ENCODE measurements at regions of chr5 and their contacts with region 1.

Region 1: GRCh38 chr5:169548315-169548714 is 35.3 kb upstream of the SPDL1 start:
- DNase-seq: peak in 1 of 2 experiments; percentile 56
- H3K4me3 ChIP-seq: no peak overlapping the region
- H3K4me3 Mint-ChIP-seq: no peak overlapping the region
- H3K27ac Mint-ChIP-seq: no peak overlapping the region
- H3K4me1 ChIP-seq: peaks cover 6% of the 10 kb centered on the region
- H3K4me1 Mint-ChIP-seq: peaks cover 17% of the 10 kb centered on the region
- H3K27me3 ChIP-seq: no peaks in the 10 kb centered on the region
- H3K27me3 Mint-ChIP-seq: no peaks in the 10 kb centered on the region
- CTCF ChIP-seq: peak; percentile 51 to 57

Region 2: DNA sequence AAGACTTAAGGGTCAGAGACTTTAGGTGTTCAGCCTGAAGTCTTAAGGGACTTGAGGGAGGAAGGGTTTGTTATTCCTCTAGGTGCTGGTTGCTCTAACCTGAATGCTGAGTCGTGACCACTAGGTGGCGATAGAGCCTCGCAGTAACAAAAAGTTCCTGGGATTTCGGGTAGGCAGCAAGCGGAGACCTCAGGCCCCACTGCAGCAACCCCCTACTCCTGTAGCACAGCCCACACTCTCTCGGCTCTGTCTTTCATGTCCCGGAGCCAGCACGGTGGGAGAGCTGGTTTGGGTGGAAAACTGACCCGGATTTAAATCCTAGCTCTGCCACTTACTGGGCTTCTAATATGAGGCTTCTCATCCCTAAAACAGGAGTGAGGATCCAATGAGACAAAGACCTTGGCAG is 868.8 kb before region 1 on chr5:
- CTCF ChIA-PET with region 1: no interaction called
- POLR2A ChIA-PET with region 1: no interaction called
- intact Hi-C with region 1: loop called (anchors 1 kb)
- DNase-seq: peak; percentile 79 to 84
- H3K4me3 ChIP-seq: no peak overlapping the region
- H3K4me3 Mint-ChIP-seq: no peak overlapping the region
- H3K27ac Mint-ChIP-seq: no peak overlapping the region
- H3K4me1 ChIP-seq: peaks cover 12% of the 10 kb centered on the region
- H3K4me1 Mint-ChIP-seq: peaks cover 26% of the 10 kb centered on the region
- H3K27me3 ChIP-seq: no peaks in the 10 kb centered on the region
- H3K27me3 Mint-ChIP-seq: no peaks in the 10 kb centered on the region
- CTCF ChIP-seq: peak; percentile 92 to 94

Region 3: GRCh38 chr5:168947212-168947868 is 601.0 kb before region 1 on chr5:
- CTCF ChIA-PET with region 1: interaction called, 3 read pairs
- POLR2A ChIA-PET with region 1: no interaction called
- intact Hi-C with region 1: loop called (anchors 1 kb)
- DNase-seq: peak; percentile 71 to 77
- H3K4me3 ChIP-seq: no peak overlapping the region
- H3K4me3 Mint-ChIP-seq: no peak overlapping the region
- H3K27ac Mint-ChIP-seq: peak overlapping the region; percentile 80
- H3K4me1 ChIP-seq: peaks cover 34% of the 10 kb centered on the region
- H3K4me1 Mint-ChIP-seq: peaks cover 33% of the 10 kb centered on the region
- H3K27me3 ChIP-seq: no peaks in the 10 kb centered on the region
- H3K27me3 Mint-ChIP-seq: no peaks in the 10 kb centered on the region
- CTCF ChIP-seq: peak; percentile 86 to 88

Region 4: DNA sequence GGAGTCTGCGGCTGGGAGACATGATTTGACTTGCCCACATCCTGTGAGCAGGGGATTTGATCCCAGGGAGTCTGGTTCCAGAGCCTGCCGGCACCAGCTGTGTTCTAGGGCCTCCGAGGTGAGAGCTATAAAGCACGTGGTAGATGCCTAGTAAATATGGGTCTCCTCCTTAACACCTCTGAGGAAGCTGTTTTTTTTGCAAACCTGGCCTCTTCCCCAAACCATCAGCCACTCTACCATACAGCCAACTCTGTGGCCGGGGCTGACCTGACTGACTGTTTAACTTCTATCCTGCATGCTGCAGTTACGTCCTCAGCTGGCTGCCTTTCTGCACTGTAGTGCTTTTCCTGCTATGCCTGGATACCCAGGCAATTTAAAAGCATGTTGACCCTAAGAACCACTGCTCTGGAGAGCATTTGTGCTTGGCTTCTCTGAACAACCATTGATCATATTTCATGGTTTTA is 467.8 kb before region 1 on chr5:
- CTCF ChIA-PET with region 1: no interaction called
- POLR2A ChIA-PET with region 1: no interaction called
- intact Hi-C with region 1: no loop called
- DNase-seq: no peak
- H3K4me3 ChIP-seq: no peak overlapping the region
- H3K4me3 Mint-ChIP-seq: no peak overlapping the region
- H3K27ac Mint-ChIP-seq: no peak overlapping the region
- H3K4me1 ChIP-seq: no peaks in the 10 kb centered on the region
- H3K4me1 Mint-ChIP-seq: peaks cover 8% of the 10 kb centered on the region
- H3K27me3 ChIP-seq: no peaks in the 10 kb centered on the region
- H3K27me3 Mint-ChIP-seq: no peaks in the 10 kb centered on the region
- CTCF ChIP-seq: no peak

Region 5: DNA sequence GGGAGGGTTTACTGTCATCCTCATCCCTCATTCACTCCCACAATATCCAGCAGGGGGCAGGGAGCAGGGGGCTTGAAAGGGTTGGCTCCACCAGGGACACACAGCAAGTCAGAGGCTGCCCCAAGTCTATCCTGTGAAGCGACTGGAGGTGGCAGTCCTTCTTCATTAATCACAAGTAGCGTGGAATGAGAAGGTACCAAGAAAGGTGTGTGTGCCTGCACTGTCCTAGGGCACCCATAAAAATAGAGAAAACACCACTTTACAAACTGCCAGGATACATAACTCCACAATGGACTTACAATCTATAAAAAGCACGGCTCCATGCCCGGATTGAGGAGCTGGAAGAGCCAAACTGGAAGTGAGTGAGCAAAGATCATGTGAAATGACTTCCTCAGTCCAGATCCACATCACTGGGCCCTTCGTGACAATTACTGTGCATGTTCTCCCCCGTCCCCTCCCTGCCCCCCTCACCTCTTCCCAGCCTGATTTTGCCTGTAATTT is 431.3 kb before region 1 on chr5:
- CTCF ChIA-PET with region 1: no interaction called
- POLR2A ChIA-PET with region 1: no interaction called
- intact Hi-C with region 1: loop called (anchors 1 kb)
- DNase-seq: peak; percentile 66 to 70
- H3K4me3 ChIP-seq: no peak overlapping the region
- H3K4me3 Mint-ChIP-seq: no peak overlapping the region
- H3K27ac Mint-ChIP-seq: no peak overlapping the region
- H3K4me1 ChIP-seq: no peaks in the 10 kb centered on the region
- H3K4me1 Mint-ChIP-seq: no peaks in the 10 kb centered on the region
- H3K27me3 ChIP-seq: no peaks in the 10 kb centered on the region
- H3K27me3 Mint-ChIP-seq: no peaks in the 10 kb centered on the region
- CTCF ChIP-seq: peak in 1 of 2 experiments; percentile 43

Region 6: GRCh38 chr5:169272731-169273401 is 275.4 kb before region 1 on chr5:
- CTCF ChIA-PET with region 1: interaction called, 3 read pairs
- POLR2A ChIA-PET with region 1: no interaction called
- intact Hi-C with region 1: loop called (anchors 5 kb)
- DNase-seq: no peak
- H3K4me3 ChIP-seq: no peak overlapping the region
- H3K4me3 Mint-ChIP-seq: peak overlapping the region; percentile 61
- H3K27ac Mint-ChIP-seq: peak overlapping the region; percentile 90
- H3K4me1 ChIP-seq: peaks cover 53% of the 10 kb centered on the region
- H3K4me1 Mint-ChIP-seq: peaks cover 62% of the 10 kb centered on the region
- H3K27me3 ChIP-seq: no peaks in the 10 kb centered on the region
- H3K27me3 Mint-ChIP-seq: no peaks in the 10 kb centered on the region
- CTCF ChIP-seq: no peak

Region 7: DNA sequence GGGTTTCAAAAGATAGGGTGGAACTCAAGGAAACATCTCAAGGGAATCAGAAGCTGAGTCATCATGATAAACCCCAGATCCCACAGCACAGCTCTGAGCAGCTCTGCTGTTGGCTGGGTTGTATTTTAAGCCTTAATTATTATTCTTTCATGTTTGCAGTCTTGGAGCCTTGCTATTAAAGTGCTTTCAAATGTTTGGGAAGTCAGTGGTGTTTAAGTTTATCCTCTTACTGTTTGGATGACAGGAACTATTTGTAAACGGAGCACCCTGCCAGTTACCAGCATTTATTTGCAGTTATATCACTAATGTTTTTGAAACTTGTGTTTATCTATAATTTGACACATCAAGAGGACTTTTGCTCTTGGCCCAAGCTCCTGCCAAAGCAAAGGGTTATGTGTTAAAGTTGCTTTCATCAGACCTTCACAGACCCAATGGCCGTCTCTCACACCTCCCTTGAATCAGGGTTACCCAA is 105.9 kb before region 1 on chr5:
- CTCF ChIA-PET with region 1: interaction called, 3 read pairs
- POLR2A ChIA-PET with region 1: no interaction called
- intact Hi-C with region 1: loop called (anchors 2 kb)
- DNase-seq: no peak
- H3K4me3 ChIP-seq: no peak overlapping the region
- H3K4me3 Mint-ChIP-seq: peak overlapping the region; percentile 25
- H3K27ac Mint-ChIP-seq: peak overlapping the region; percentile 23
- H3K4me1 ChIP-seq: peaks cover 62% of the 10 kb centered on the region
- H3K4me1 Mint-ChIP-seq: peaks cover 46% of the 10 kb centered on the region
- H3K27me3 ChIP-seq: no peaks in the 10 kb centered on the region
- H3K27me3 Mint-ChIP-seq: no peaks in the 10 kb centered on the region
- CTCF ChIP-seq: no peak

Measured in Caco-2 (cell line).